Endothelial cell of umbilical vein (primary cell): ENCODE measurements at regions of chr4 and their contacts with region 1.

Region 1: DNA sequence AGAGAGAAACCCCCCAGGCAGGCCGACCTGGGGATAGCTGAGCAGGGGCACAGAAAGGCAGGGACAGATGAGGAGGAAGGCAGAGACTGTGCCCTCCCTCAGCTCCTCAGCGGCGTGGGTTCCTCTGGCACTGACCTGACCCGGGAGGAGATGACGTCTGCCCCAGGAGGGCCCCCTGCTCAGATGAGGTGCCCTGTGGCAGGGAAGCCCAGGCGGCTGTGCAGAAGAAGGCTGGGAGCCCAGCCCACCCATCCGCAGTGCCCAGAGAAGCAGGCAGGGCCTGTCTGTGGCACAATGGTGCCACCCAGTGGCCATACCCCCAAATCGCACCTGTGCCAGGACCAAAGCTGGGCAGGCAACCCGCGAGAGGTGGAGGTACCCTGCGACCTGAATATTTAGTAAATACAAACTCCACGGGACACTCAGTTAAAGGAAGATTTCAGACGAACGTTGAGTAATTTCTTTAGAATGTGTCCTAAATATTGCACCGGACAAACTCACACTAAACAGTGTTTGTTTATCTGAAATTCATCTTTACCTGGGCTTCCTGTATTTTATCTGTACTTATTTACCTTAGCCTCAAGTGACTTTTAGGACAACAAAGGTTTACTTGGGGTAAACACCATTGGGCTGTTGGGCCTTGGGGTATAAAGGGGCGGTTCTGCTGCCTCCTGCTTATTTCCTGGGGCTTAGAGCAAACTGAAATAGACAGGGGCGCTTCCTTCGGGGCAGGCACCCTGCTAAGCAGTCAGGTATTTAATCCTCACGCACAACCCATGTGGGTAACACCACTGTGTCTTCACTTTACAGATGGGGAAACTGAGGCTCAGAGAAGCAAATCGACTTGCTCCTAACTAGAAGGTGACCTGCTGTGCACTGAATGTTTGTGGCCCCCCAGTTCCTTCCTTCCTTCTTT is 46.5 kb upstream of the HMX1 start:
- DNase-seq: peak; percentile 44
- H3K4me3 ChIP-seq: no peak overlapping the region
- H3K27ac ChIP-seq: no peak overlapping the region
- H3K4me1 ChIP-seq: no peaks in the 10 kb centered on the region
- H3K27me3 ChIP-seq: no peaks in the 10 kb centered on the region
- CTCF ChIP-seq: peak; percentile 82 to 90
- POLR2A ChIP-seq: no peak

Region 2: DNA sequence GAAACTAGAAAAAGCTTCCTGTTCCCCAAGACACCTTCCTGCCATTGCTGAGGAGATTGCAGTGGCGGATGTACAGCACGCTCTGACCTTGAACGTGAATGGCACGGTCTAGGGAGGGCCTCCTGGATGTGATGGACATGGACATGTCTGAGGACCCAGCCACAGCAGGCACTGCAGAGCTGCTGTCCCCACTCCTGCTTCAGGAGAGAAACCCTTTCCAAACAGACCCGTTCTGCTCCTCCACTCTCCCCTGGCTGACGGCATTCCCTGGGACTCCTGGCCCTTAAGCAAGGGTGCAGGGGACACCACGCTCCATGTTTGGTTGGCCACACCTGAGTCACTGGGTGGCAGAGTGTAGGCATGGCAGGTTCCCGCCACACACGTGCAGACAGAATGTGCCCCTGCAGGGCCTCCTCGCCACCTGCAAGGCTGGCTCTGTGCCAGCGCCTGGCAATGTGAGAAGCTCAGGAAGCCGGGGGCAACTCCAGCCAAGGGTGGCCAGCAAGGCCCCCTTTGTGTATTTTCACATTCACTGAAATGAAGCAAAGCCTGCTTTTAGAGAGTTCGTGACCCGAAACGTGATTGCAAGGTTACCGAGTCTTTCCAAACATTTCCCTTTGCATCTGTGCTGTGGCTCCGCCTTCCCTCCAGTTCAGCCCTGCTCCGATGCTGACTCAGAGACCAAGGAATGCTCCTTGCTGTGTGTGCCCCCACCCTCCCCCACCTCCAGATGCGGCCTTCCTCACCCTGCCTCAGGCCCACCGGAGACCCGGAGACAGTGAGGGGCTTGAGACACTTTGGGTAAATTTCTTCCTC is 602.5 kb before region 1 on chr4:
- CTCF ChIA-PET with region 1: no interaction called
- POLR2A ChIA-PET with region 1: no interaction called
- dilution Hi-C with region 1: no loop called
- intact Hi-C with region 1: no loop called
- DNase-seq: peak; percentile 81
- H3K4me3 ChIP-seq: no peak overlapping the region
- H3K27ac ChIP-seq: no peak overlapping the region
- H3K4me1 ChIP-seq: peaks cover 7% of the 10 kb centered on the region
- H3K27me3 ChIP-seq: peaks cover 1 to 12% of the 10 kb centered on the region in 2 experiments
- CTCF ChIP-seq: no peak
- POLR2A ChIP-seq: no peak

Region 3: GRCh38 chr4:8607603-8608481 is 310.3 kb before region 1 on chr4:
- CTCF ChIA-PET with region 1: interaction called, 17 read pairs
- POLR2A ChIA-PET with region 1: no interaction called
- dilution Hi-C with region 1: no loop called
- intact Hi-C with region 1: no loop called
- DNase-seq: peak; percentile 11
- H3K4me3 ChIP-seq: no peak overlapping the region
- H3K27ac ChIP-seq: no peak overlapping the region
- H3K4me1 ChIP-seq: no peaks in the 10 kb centered on the region
- H3K27me3 ChIP-seq: no peaks in the 10 kb centered on the region
- CTCF ChIP-seq: peak; percentile 89 to 97
- POLR2A ChIP-seq: no peak

Region 4: GRCh38 chr4:8688041-8688937 is 229.8 kb before region 1 on chr4:
- CTCF ChIA-PET with region 1: interaction called, 32 read pairs
- POLR2A ChIA-PET with region 1: no interaction called
- dilution Hi-C with region 1: no loop called
- intact Hi-C with region 1: no loop called
- DNase-seq: peak; percentile 4
- H3K4me3 ChIP-seq: no peak overlapping the region
- H3K27ac ChIP-seq: no peak overlapping the region
- H3K4me1 ChIP-seq: no peaks in the 10 kb centered on the region
- H3K27me3 ChIP-seq: no peaks in the 10 kb centered on the region
- CTCF ChIP-seq: peak; percentile 58 to 76
- POLR2A ChIP-seq: no peak

Region 5: GRCh38 chr4:8785656-8786142 is 132.4 kb before region 1 on chr4:
- CTCF ChIA-PET with region 1: no interaction called
- POLR2A ChIA-PET with region 1: no interaction called
- dilution Hi-C with region 1: no loop called
- intact Hi-C with region 1: no loop called
- DNase-seq: no peak
- H3K4me3 ChIP-seq: no peak overlapping the region
- H3K27ac ChIP-seq: no peak overlapping the region
- H3K4me1 ChIP-seq: no peaks in the 10 kb centered on the region
- H3K27me3 ChIP-seq: no peaks in the 10 kb centered on the region
- CTCF ChIP-seq: no peak
- POLR2A ChIP-seq: no peak